ENCODE measurements at regions of chr11 and their contacts with region 1.

Region 1: DNA sequence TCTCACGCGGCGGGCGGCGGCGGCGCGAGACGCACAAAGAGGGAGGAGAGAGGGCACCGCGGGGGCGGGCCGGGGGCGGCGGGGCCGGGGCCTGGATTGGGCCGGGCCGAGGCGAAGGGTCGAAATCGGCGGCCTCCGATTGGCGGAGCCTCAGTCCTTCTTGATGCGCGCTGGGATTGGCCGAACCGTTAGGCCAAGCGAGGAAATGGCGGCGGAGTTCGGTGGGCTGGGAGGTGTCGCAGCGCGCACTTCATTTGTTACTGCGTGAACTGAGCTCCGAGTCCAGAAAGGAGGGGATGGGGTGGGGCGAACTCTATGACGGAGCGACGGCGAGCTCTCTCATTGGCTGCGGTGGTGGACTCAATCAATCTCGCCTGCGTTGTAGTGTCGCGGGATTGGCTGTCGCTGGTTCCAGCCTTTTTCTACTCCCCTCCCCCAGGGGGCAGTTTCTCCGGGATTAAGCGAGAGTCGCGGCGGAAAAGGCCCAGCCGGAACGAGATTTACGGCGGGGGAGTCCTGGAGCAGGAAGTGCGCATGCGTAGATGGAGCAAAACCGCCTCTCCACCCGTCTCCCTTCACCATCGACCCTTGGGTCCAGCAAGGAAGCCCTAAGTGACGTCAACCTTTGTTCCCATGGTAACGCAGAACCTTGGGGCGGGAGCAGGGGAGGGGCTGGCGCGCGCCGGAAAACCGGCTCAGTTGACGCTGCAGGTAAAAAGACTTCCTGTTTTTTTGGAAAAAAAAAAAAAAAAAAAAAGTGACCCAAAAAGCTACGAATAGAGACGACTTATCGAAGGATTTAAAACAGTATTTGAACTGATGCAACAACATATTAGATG is at the start of gene SF1:
- DNase-seq: peak; percentile 100
- H3K4me3 ChIP-seq: peak within 1 kb of the TSS; percentile 99 to 100
- H3K27ac ChIP-seq: peak within 1 kb of the TSS; percentile 99 to 100
- H3K4me1 ChIP-seq: peaks cover 6% of the 10 kb centered on the region
- H3K27me3 ChIP-seq: no peaks in the 10 kb centered on the region
- CTCF ChIP-seq: peak in 3 of 4 experiments; percentile 26 to 68 (median 46)
- POLR2A ChIP-seq: peak; percentile 90
- total RNA-seq, gene SF1: 263 to 409 TPM

Region 2: GRCh38 chr11:64742889-64743590 is 35.7 kb before region 1 on chr11:
- intact Hi-C with region 1: loop called (anchors 5 kb)
- DNase-seq: no peak
- H3K4me3 ChIP-seq: peak overlapping the region; percentile 40 to 45
- H3K27ac ChIP-seq: peak overlapping the region; percentile 52 to 83
- H3K4me1 ChIP-seq: peaks cover 7% of the 10 kb centered on the region
- H3K27me3 ChIP-seq: no peaks in the 10 kb centered on the region
- CTCF ChIP-seq: peak; percentile 69 to 81 (median 74)
- POLR2A ChIP-seq: no peak

Region 3: DNA sequence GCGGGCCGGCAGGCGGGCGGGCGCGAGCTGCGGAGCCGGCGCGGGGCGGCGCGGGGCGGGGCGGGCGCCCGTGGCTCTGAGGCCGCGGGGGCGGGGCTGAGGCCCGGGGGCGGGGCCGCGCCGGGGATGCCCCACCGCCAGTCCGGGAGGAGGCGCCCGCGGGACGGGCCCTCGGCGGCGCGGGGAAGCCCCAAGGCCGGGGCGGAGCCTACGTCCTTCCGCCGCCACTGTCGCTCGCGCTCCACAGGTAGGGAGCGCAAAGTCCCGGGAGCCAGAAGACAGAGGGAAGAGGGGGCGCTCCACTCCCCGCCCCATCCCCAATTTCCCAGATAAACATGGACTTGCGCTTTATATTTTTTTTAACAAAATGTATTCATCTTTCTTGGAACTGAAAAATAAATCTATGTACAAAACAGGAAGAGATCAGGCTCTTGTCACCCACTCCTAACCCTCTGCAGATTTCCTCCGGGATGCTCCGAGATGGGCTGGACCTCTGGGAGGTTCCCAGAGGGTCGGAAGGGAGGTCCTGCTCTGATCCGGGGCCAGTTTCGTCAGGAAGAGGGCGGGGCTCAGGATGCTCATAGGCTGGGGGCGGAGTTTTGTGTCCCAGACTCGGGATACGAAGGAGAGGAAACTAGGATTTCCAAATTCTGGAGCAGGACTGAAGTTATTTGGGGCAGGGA is 24.6 kb after region 1 on chr11 and contains the start of gene MAP4K2:
- intact Hi-C with region 1: loop called (anchors 2 kb)
- DNase-seq: peak; percentile 87
- H3K4me3 ChIP-seq: peak within 1 kb of the TSS; percentile 57 to 58
- H3K27ac ChIP-seq: peak within 1 kb of the TSS; percentile 83 to 90
- H3K4me1 ChIP-seq: peaks cover 7% of the 10 kb centered on the region
- H3K27me3 ChIP-seq: no peaks in the 10 kb centered on the region
- CTCF ChIP-seq: peak in 1 of 4 experiments; percentile 40
- POLR2A ChIP-seq: no peak
- total RNA-seq, gene MAP4K2: 10.7 to 35.8 TPM

Region 4: GRCh38 chr11:64971421-64972233 is 192.9 kb after region 1 on chr11 and contains the start of gene MAJIN:
- intact Hi-C with region 1: no loop called
- DNase-seq: peak; percentile 55
- H3K4me3 ChIP-seq: peak within 1 kb of the TSS in 1 of 2 donors; percentile 35
- H3K27ac ChIP-seq: no peak within 1 kb of the TSS
- H3K4me1 ChIP-seq: no peaks in the 10 kb centered on the region
- H3K27me3 ChIP-seq: no peaks in the 10 kb centered on the region
- CTCF ChIP-seq: no peak
- POLR2A ChIP-seq: no peak
- total RNA-seq, gene MAJIN: 7.4 TPM in 1 of 2 donors, not detected in the other

Region 5: GRCh38 chr11:65615229-65615941 is 836.7 kb after region 1 on chr11 and contains the start of gene PCNX3:
- intact Hi-C with region 1: no loop called
- DNase-seq: peak; percentile 100
- H3K4me3 ChIP-seq: peak within 1 kb of the TSS; percentile 75 to 90
- H3K27ac ChIP-seq: peak within 1 kb of the TSS; percentile 93 to 94
- H3K4me1 ChIP-seq: peaks cover 37% of the 10 kb centered on the region
- H3K27me3 ChIP-seq: no peaks in the 10 kb centered on the region
- CTCF ChIP-seq: peak in 2 of 4 experiments; percentile 22 to 35
- POLR2A ChIP-seq: peak; percentile 37
- total RNA-seq, gene PCNX3: 32.0 to 67.9 TPM

Measured in prostate gland (tissue), 2 donors.